Common myeloid progenitor, CD34-positive (primary cell): ENCODE measurements at regions of chr22 and their contacts with region 1.

Region 1: DNA sequence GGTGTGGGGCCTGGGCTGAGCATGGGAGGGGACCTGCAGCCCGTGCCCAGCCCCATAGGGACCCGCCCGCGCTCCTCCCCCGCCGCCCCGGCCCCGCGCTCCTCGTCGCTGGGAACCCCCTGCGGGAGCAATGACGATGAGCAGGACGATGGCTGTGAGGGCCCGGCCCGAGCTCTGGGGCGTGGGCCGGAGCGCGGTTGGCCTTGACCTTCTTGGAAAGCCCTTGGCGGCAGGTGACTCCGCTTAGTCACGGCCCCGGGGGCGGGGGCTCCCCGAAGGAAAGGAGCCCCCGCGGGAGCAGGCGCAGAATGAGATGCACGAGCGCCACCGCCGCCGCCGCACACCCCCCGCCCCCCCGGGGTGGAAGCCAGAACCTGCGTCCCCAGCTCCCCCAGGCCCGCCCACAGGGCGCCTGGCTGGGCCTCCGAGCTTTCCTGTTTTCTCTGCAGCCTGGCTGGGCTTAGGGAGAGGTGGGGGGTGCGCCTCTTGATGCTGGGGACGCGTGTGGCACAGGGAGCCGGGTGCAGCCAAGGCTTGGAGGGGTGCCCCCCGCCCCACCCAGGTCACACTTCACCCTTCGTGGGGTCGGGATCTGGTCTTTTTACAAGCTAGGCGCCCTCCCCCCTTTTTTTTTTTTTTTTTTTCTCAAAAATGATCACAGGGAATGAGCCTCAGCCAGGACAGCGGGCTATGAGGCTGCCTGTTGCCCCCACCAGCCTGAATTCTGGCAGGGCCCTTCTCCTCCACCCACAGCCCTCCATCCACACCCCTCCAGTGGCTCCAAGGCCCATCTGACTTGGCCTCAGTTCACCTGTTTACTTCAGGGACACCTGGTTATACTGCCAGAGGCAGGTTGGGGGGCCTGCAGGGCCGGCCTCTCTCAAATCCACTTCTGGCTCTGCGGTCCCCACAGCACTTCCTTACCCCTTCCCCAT is 17.9 kb downstream of the CRELD2 start:
- DNase-seq: peak; percentile 94 to 98 (median 98)
- H3K4me3 ChIP-seq: peak overlapping the region in 6 of 7 experiments; percentile 32 to 63 (median 43)
- H3K27ac ChIP-seq: peak overlapping the region; percentile 44 to 82
- H3K4me1 ChIP-seq: peaks cover 6 to 60% (median 54%) of the 10 kb centered on the region in 4 experiments
- H3K27me3 ChIP-seq: no peaks in the 10 kb centered on the region

Region 2: DNA sequence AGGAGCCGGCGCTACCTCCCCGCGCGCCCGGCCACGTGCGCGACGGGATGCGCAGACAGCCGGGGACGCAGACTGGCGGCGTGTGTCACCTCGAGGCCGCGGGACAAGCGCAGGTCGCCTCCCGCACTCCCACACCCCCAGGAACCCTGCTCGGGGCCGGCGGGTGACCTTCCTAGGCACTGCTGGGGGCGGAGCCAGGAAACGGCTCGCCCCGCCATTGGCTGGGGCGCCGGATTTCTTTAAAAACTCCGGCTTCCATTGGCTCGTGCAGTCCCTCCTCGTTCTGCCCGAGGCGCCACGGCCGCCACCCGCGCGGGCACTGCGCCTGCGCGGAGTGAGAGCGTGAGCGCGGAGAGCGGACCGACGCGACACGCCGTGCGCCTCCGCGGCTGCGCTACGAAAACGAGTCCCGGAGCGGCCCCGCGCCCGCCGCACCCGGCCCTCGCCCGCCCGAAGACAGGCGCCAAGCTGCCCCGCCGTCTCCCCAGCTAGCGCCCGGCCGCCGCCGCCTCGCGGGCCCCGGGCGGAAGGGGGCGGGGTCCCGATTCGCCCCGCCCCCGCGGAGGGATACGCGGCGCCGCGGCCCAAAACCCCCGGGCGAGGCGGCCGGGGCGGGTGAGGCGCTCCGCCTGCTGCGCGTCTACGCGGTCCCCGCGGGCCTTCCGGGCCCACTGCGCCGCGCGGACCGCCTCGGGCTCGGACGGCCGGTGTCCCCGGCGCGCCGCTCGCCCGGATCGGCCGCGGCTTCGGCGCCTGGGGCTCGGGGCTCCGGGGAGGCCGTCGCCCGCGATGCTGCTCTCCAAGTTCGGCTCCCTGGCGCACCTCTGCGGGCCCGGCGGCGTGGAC is 24.1 kb after region 1 on chr22 and contains the start of gene PIM3:
- CTCF ChIA-PET with region 1: interaction called, 16 read pairs
- POLR2A ChIA-PET with region 1: interaction called, 54 read pairs
- DNase-seq: peak; percentile 95 to 97 (median 97)
- H3K4me3 ChIP-seq: peak within 1 kb of the TSS; percentile 77 to 95 (median 89)
- H3K27ac ChIP-seq: peak within 1 kb of the TSS; percentile 54 to 78
- H3K4me1 ChIP-seq: peaks cover 0 to 43% (median 37%) of the 10 kb centered on the region in 4 experiments
- H3K27me3 ChIP-seq: no peaks in the 10 kb centered on the region

Region 3: DNA sequence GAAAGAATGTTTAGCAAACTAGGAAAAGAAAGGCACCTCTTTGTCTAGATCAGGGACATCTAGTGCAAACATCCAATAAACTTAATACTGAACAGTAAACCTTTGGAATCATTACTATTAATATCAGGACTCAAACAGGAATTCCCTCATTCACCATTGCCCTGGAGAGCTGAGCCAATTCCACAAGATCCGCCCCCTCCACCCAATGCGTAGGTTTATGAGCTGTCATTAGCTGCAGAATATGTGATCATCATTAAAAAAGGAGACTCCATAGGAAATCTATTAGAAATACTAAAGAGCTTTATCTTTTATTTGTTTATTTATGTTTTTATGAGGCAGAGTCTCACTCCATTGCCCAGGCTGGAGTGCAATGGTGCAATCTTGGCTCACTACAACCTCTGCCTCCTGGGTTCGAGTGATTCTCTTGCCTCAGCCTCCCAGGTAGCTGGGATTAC is 70.8 kb after region 1 on chr22:
- CTCF ChIA-PET with region 1: no interaction called
- POLR2A ChIA-PET with region 1: no interaction called
- DNase-seq: no peak
- H3K4me3 ChIP-seq: no peak overlapping the region
- H3K27ac ChIP-seq: no peak overlapping the region
- H3K4me1 ChIP-seq: peaks cover 0 to 13% (median 8%) of the 10 kb centered on the region in 4 experiments
- H3K27me3 ChIP-seq: peaks cover 0 to 25% (median 8%) of the 10 kb centered on the region in 5 experiments

Region 4: DNA sequence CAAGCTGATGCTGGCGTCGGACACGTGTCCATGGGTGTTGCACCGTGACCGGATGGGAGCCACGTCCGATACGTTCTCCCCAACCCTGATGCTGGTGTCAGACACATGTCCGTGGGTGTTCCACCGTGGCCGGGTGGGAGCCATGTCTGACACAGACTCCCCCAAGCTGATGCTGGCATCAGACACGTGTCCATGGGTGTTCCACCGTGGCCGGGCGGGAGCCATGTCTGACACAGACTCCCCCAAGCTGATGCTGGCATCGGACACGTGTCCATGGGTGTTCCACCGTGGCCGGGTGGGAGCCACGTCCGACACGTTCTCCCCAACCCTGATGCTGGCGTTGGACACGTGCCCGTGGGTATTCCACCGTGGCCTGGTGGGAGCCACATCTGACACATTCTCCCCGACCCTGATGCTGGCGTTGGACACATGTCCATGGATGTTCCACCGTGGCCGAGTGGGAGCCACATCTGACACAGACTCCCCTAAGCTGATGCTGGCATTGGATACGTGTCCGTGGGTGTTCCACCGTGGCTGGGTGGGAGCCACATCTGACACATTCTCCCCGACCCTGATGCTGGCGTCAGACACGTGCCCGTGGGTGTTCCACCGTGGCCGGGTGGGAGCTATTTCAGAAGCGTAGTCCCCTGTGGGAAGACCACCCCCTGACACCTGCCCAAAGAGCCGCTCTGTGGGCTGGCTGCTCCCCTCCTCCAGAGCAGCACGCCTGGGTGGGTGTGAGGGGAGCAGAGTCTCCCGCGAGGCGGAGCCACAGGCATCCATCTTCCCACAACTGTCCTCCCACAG is 284.5 kb after region 1 on chr22:
- CTCF ChIA-PET with region 1: no interaction called
- POLR2A ChIA-PET with region 1: interaction called, 11 read pairs
- DNase-seq: no peak
- H3K4me3 ChIP-seq: no peak overlapping the region
- H3K27ac ChIP-seq: no peak overlapping the region
- H3K4me1 ChIP-seq: peaks cover 0 to 8% (median 3%) of the 10 kb centered on the region in 4 experiments
- H3K27me3 ChIP-seq: no peaks in the 10 kb centered on the region